ENCODE measurements at regions of chr6 and their contacts with region 1.

Region 1: GRCh38 chr6:130075879-130076460 is 57.6 kb downstream of the L3MBTL3 start:
- DNase-seq: no peak
- ATAC-seq: peak; percentile 23
- H3K4me3 Mint-ChIP-seq: no peak overlapping the region
- H3K27ac Mint-ChIP-seq: peak overlapping the region; percentile 5
- H3K4me1 Mint-ChIP-seq: peaks cover 32% of the 10 kb centered on the region
- H3K27me3 Mint-ChIP-seq: no peaks in the 10 kb centered on the region

Region 2: GRCh38 chr6:130098317-130098716 is 22.3 kb after region 1 on chr6:
- CTCF ChIA-PET with region 1: no interaction called
- DNase-seq: no peak
- ATAC-seq: no peak
- H3K4me3 Mint-ChIP-seq: no peak overlapping the region
- H3K27ac Mint-ChIP-seq: no peak overlapping the region
- H3K4me1 Mint-ChIP-seq: peaks cover 12% of the 10 kb centered on the region
- H3K27me3 Mint-ChIP-seq: no peaks in the 10 kb centered on the region

Region 3: DNA sequence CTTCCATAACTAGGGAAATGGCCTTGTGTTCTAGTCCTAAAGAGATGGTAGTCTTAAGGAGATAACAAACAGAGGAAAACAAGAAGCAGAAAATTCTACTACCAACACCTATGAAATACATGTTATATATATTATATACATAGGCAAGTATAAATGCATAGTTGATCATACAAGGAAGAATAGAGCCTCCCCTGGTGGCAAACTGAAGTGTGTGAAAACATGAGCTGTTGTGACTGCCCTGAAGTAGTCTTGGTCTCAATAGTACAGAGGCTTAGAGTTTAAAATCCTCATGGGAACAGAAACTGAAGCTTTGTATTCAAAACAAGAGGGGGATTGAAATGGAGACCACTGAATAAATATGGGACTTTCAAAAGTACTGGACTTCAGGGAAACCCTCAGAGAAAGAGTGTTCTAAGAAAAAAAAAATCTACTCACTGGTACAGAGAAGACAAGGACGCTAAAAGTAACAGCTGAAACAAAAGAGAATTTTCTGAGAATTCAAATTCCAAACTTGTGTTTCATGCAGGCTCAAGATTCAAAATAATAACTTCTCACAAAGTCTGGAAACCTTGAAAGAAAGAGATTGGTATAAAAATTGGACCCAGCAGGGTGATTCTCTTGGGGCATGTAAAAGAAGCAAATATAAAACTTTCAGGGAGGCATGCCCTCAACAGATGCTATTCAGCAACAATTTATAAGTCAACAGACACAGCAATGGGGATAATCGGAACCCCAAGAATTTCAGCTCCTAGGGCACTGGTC is 206.4 kb after region 1 on chr6:
- CTCF ChIA-PET with region 1: interaction called, 10 read pairs
- DNase-seq: peak; percentile 63
- ATAC-seq: peak; percentile 93
- H3K4me3 Mint-ChIP-seq: no peak overlapping the region
- H3K27ac Mint-ChIP-seq: peak overlapping the region; percentile 73
- H3K4me1 Mint-ChIP-seq: peaks cover 12% of the 10 kb centered on the region
- H3K27me3 Mint-ChIP-seq: no peaks in the 10 kb centered on the region